GM10248 (cell line): ENCODE measurements at regions of chrX and their contacts with region 1.

Region 1: DNA sequence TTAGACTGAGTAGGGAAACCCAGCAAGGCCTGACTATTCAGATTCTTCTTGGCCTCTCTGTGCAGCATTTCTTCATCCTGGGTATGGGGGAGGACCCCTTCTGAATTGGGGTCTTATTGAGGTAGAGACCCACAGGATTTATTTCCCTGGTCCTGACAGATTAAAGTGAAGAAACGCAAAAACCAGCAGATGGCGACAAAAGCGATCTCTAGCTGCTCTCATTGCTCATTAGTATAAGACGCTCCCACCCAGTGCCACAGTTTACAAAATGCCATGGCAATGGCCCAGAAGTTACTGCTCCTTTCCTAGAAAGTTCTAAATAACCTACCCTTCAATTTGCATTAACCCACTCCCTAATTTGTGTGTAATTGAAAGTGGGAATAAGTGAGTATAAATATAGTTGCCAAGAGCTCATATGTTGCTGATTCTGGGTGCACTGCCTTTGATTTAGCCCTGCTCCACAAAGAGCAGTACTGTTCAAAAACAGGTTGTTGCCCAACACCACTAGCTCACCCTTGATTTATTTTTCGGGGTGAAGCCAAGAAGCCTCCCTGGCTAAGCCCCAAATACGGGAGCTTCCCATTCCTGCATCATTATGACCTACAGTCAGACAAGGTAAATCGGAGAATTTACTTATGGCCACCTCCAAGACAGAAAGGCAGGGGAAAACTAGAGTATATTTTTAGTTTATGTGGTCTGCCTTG is 3.7 kb upstream of the BEX4 start:
- DNase-seq: peak; percentile 25
- CTCF ChIP-seq: peak; percentile 31

Region 2: DNA sequence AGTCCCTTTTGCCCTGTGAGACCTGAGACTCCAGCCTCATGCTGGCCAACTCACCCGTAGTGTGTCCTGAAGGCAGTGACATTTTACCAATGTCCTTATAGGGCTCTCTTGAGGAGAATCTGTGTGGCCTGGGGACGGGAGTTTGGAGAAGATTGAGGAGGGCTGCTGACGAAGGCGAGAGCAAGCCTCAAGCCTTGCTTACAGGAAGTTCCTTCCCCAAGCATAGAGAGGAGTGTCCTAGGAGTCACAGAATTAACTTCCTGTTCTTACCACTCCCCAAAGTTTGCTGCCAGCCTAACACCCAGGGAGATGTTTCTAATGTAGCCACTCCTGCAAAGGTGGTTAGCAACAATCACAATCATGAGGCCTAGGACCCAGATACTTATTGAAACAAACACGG is 118.2 kb before region 1 on chrX and contains the start of gene NXF3:
- CTCF ChIA-PET with region 1: no interaction called
- POLR2A ChIA-PET with region 1: no interaction called
- DNase-seq: no peak
- CTCF ChIP-seq: no peak

Region 3: DNA sequence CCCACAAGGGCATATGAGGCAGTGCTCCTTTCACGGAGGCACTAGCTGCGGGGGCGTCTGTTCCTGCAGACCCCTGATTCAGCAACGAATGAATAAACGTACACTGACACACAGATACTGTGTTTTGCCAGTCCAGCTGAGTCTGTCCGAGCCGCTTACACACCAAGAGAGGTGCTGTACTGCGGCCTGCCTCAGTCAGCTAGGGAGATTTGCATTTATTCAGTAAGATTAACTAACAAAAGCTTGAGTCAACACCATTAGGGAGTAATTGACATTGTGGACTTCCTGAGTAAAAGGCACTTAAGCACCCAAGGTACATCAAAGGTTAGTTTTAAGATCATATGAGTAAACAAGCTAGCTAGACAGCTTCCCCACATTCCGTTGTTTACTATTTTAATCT is 27.3 kb before region 1 on chrX:
- CTCF ChIA-PET with region 1: no interaction called
- POLR2A ChIA-PET with region 1: no interaction called
- DNase-seq: no peak
- CTCF ChIP-seq: no peak

Region 4: GRCh38 chrX:103248553-103248952 is 37.4 kb after region 1 on chrX:
- CTCF ChIA-PET with region 1: interaction called, 10 read pairs
- POLR2A ChIA-PET with region 1: no interaction called
- DNase-seq: peak; percentile 18
- CTCF ChIP-seq: peak; percentile 36